Heart left ventricle (tissue), 16 donors: ENCODE measurements at regions of chr20 and their contacts with region 1.

Region 1: GRCh38 chr20:55449091-55449794 is 556.1 kb downstream of the CBLN4 start:
- DNase-seq: no peak
- ATAC-seq: no peak
- H3K4me3 ChIP-seq: no peak overlapping the region
- H3K27ac ChIP-seq: no peak overlapping the region
- H3K4me1 ChIP-seq: peaks cover 0 to 14% (median 0%) of the 10 kb centered on the region in 12 donors
- H3K27me3 ChIP-seq: no peaks in the 10 kb centered on the region
- CTCF ChIP-seq: no peak
- POLR2A ChIP-seq: no peak

Region 2: GRCh38 chr20:55928266-55928665 is 479.0 kb after region 1 on chr20:
- intact Hi-C with region 1: loop called in 1 of 10 experiments (anchors 10 kb)
- DNase-seq: no peak
- ATAC-seq: no peak
- H3K4me3 ChIP-seq: no peak overlapping the region
- H3K27ac ChIP-seq: no peak overlapping the region
- H3K4me1 ChIP-seq: no peaks in the 10 kb centered on the region
- H3K27me3 ChIP-seq: no peaks in the 10 kb centered on the region
- CTCF ChIP-seq: no peak
- POLR2A ChIP-seq: no peak

Region 3: DNA sequence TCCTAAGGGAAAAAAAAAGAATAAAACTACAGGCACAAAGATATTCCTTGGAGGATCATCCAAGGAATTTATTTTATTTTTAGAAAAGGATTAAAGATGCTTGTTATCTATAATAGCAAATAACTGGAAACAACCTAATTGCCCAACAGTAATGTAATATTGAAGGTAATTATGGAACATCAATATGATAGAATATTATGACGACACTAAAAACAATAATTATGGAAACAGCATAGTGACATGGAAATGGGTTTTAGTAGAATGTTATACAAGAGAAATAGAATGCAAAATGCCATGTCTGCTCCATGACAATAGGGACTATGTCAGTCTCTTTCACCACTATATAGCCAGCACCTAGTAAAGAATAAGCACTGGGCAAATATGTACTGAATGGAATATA is 607.9 kb after region 1 on chr20:
- intact Hi-C with region 1: no loop called
- DNase-seq: no peak
- ATAC-seq: no peak
- H3K4me3 ChIP-seq: no peak overlapping the region
- H3K27ac ChIP-seq: no peak overlapping the region
- H3K4me1 ChIP-seq: no peaks in the 10 kb centered on the region
- H3K27me3 ChIP-seq: no peaks in the 10 kb centered on the region
- CTCF ChIP-seq: no peak
- POLR2A ChIP-seq: no peak